B cell (primary cell): ENCODE measurements at regions of chr1 and their contacts with region 1.

Region 1: GRCh38 chr1:179954493-179955297 is at the start of gene CEP350:
- DNase-seq: peak; percentile 99
- ATAC-seq: peak; percentile 90
- H3K4me3 ChIP-seq: peak within 1 kb of the TSS; percentile 49 to 96 (median 92)
- H3K4me3 Mint-ChIP-seq: peak within 1 kb of the TSS; percentile 87
- H3K27ac ChIP-seq: peak within 1 kb of the TSS; percentile 76 to 96
- H3K27ac Mint-ChIP-seq: peak within 1 kb of the TSS; percentile 93
- H3K4me1 ChIP-seq: peaks cover 42 to 46% of the 10 kb centered on the region in 2 donors
- H3K4me1 Mint-ChIP-seq: peaks cover 47% of the 10 kb centered on the region
- H3K27me3 ChIP-seq: no peaks in the 10 kb centered on the region
- H3K27me3 Mint-ChIP-seq: no peaks in the 10 kb centered on the region
- CTCF ChIP-seq: no peak
- total RNA-seq, gene CEP350: 87.4 and 92.3 TPM in 2 replicates

Region 2: DNA sequence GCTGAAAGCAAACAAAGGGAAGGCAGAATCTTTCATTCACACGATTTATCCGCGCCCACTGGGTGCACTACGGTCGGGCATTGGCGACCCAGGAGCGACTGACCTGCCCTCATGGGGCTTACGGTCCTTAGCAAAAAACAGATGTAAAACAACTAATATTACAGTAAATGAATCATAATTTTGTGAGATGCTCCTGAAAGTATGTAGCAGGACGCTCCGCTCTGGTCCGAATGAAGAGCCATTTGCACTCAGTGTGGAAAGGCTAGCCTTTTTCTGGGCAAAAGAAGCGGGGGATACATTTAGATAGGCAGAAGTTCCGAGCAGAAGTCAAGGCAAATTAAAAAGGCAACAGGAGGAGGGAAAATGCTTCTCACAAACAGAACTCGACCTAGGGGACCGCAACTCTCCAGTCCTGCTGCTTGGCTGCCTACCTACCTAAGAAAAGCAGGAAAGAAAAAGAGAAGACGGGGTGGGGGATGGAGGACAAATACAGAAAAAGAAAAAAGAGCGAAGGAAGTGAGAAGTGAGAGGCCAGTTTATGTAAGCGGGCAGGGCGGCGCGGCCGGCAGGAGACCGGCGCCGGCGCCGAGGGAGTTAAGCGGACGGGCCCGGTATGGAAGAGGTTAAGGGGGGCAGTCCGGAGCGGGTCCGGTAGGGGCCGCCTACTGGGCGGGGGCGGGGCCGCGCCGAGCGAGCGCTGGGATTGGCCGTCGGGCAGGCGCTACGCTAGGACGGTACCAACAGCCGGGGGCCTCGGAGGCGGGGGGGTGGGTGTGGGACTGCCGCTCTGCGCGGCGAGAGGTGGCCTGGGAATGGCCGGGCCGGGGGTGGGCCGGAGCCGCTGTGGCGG is 929.3 kb before region 1 on chr1 and contains the start of gene FAM20B:
- CTCF ChIA-PET with region 1: no interaction called
- POLR2A ChIA-PET with region 1: no interaction called
- intact Hi-C with region 1: loop called (anchors 10 kb)
- DNase-seq: peak; percentile 95
- ATAC-seq: peak; percentile 80
- H3K4me3 ChIP-seq: peak within 1 kb of the TSS; percentile 77 to 97 (median 87)
- H3K4me3 Mint-ChIP-seq: peak within 1 kb of the TSS; percentile 97
- H3K27ac ChIP-seq: peak within 1 kb of the TSS; percentile 92 to 95
- H3K27ac Mint-ChIP-seq: peak within 1 kb of the TSS; percentile 95
- H3K4me1 ChIP-seq: peaks cover 29 to 36% of the 10 kb centered on the region in 2 donors
- H3K4me1 Mint-ChIP-seq: peaks cover 45% of the 10 kb centered on the region
- H3K27me3 ChIP-seq: no peaks in the 10 kb centered on the region
- H3K27me3 Mint-ChIP-seq: no peaks in the 10 kb centered on the region
- CTCF ChIP-seq: no peak
- total RNA-seq, gene FAM20B: 28.5 and 32.8 TPM in 2 replicates

Region 3: DNA sequence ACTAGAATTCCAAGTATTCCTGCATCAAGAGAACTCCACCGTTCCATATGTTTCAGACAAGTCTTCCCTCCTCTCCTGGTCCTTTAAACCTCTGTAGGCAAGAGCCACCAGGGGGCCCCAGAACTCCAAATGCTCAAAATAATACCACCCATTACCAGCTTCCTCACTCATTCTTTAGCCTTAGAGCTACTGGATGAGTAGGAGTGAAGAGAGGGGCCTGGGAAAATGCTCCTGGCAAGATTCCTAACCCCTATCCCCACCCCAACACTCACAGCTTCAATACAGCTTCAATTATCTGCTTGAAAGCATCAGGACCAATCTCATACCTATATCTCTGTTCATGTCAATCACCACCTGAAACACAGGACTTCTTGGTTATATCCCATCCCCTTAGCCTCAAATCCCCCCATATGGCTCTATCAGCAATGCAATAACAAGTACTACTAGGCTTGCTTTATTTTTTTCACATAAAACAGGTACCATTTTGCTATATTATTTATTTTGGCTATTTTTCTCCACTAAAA is 86.8 kb before region 1 on chr1:
- CTCF ChIA-PET with region 1: interaction called, 10 read pairs
- POLR2A ChIA-PET with region 1: no interaction called
- intact Hi-C with region 1: no loop called
- DNase-seq: peak; percentile 69
- ATAC-seq: peak; percentile 71
- H3K4me3 ChIP-seq: no peak overlapping the region
- H3K4me3 Mint-ChIP-seq: no peak overlapping the region
- H3K27ac ChIP-seq: no peak overlapping the region
- H3K27ac Mint-ChIP-seq: peak overlapping the region; percentile 3
- H3K4me1 ChIP-seq: peaks cover 5 to 6% of the 10 kb centered on the region in 2 donors
- H3K4me1 Mint-ChIP-seq: peaks cover 21% of the 10 kb centered on the region
- H3K27me3 ChIP-seq: no peaks in the 10 kb centered on the region
- H3K27me3 Mint-ChIP-seq: no peaks in the 10 kb centered on the region
- CTCF ChIP-seq: peak; percentile 80

Region 4: GRCh38 chr1:179882243-179883039 is 72.3 kb before region 1 on chr1 and contains the start of gene TOR1AIP1:
- CTCF ChIA-PET with region 1: interaction called, 25 read pairs
- POLR2A ChIA-PET with region 1: interaction called, 31 read pairs
- intact Hi-C with region 1: loop called (anchors 1 kb)
- DNase-seq: peak; percentile 100
- ATAC-seq: peak; percentile 75
- H3K4me3 ChIP-seq: peak within 1 kb of the TSS; percentile 78 to 99 (median 96)
- H3K4me3 Mint-ChIP-seq: peak within 1 kb of the TSS; percentile 99
- H3K27ac ChIP-seq: peak within 1 kb of the TSS; percentile 99 to 100
- H3K27ac Mint-ChIP-seq: peak within 1 kb of the TSS; percentile 100
- H3K4me1 ChIP-seq: peaks cover 20 to 40% of the 10 kb centered on the region in 2 donors
- H3K4me1 Mint-ChIP-seq: peaks cover 53% of the 10 kb centered on the region
- H3K27me3 ChIP-seq: no peaks in the 10 kb centered on the region
- H3K27me3 Mint-ChIP-seq: no peaks in the 10 kb centered on the region
- CTCF ChIP-seq: peak; percentile 59
- total RNA-seq, gene TOR1AIP1: 43.3 and 50.0 TPM in 2 replicates

Region 5: GRCh38 chr1:180154325-180155181 is 199.9 kb after region 1 on chr1 and contains the start of gene QSOX1:
- CTCF ChIA-PET with region 1: no interaction called
- POLR2A ChIA-PET with region 1: no interaction called
- intact Hi-C with region 1: loop called (anchors 1 kb)
- DNase-seq: peak; percentile 91
- ATAC-seq: peak; percentile 96
- H3K4me3 ChIP-seq: peak within 1 kb of the TSS; percentile 58 to 89 (median 84)
- H3K4me3 Mint-ChIP-seq: peak within 1 kb of the TSS; percentile 96
- H3K27ac ChIP-seq: peak within 1 kb of the TSS; percentile 21 to 65
- H3K27ac Mint-ChIP-seq: peak within 1 kb of the TSS; percentile 86
- H3K4me1 ChIP-seq: peaks cover 22 to 25% of the 10 kb centered on the region in 2 donors
- H3K4me1 Mint-ChIP-seq: peaks cover 26% of the 10 kb centered on the region
- H3K27me3 ChIP-seq: no peaks in the 10 kb centered on the region
- H3K27me3 Mint-ChIP-seq: no peaks in the 10 kb centered on the region
- CTCF ChIP-seq: peak; percentile 9
- total RNA-seq, gene QSOX1: 16.9 and 20.6 TPM in 2 replicates

Region 6: GRCh38 chr1:180502360-180503273 is 547.9 kb after region 1 on chr1 and contains the start of gene ACBD6:
- CTCF ChIA-PET with region 1: no interaction called
- POLR2A ChIA-PET with region 1: no interaction called
- intact Hi-C with region 1: loop called (anchors 5 kb)
- DNase-seq: peak; percentile 92
- ATAC-seq: peak; percentile 82
- H3K4me3 ChIP-seq: peak within 1 kb of the TSS; percentile 69 to 97 (median 84)
- H3K4me3 Mint-ChIP-seq: peak within 1 kb of the TSS; percentile 95
- H3K27ac ChIP-seq: peak within 1 kb of the TSS; percentile 74 to 87
- H3K27ac Mint-ChIP-seq: peak within 1 kb of the TSS; percentile 98
- H3K4me1 ChIP-seq: peaks cover 13 to 19% of the 10 kb centered on the region in 2 donors
- H3K4me1 Mint-ChIP-seq: peaks cover 32% of the 10 kb centered on the region
- H3K27me3 ChIP-seq: no peaks in the 10 kb centered on the region
- H3K27me3 Mint-ChIP-seq: no peaks in the 10 kb centered on the region
- CTCF ChIP-seq: no peak
- total RNA-seq, gene ACBD6: 80.9 and 82.8 TPM in 2 replicates

Region 7: DNA sequence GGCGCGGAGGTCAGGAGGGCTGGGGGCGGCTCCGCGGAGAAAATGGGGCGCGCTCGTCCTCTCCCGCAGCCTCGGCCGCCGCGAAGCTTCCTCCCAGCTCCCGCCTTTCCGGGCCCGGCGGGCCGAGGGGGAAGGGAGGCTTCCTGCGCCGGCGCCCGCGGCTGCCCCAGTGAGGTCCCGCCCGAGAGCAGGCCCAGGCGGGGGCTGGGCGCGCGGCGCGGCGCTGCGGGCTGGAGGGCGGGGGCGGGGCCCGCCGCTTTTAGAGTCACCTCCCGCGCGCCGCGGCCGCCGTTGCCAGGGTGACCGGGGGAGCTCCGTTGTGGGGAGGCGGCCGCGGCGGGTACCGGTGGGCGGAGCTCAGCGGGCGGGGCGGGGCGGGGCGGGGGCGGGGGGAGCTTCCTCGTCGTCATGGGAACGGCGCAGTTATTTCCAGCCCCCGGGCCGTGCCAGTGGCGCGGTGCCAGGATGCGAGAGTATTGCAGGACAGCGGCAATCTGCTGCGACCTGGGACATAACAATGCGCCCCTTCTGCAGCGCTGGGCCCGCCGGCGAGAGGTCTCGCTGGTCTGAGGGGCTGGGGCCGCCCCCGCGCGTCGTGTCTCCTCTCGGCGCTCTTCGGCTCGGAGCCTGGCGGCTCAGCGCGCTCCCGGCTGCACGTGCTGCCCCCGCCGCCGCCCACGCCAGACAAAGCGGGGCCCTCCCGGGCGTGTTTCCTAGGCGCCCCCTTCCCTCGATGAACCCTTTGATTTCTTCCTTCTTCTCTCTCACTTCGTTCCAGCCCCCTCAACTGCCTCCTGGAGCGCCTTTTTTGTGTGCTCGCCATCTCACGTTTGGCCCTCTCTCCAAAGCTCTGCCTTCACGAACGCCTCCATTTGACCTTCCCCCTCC is 1150.7 kb after region 1 on chr1:
- CTCF ChIA-PET with region 1: no interaction called
- POLR2A ChIA-PET with region 1: no interaction called
- intact Hi-C with region 1: loop called (anchors 10 kb)
- DNase-seq: peak; percentile 94
- ATAC-seq: peak; percentile 86
- H3K4me3 ChIP-seq: peak overlapping the region in 4 of 5 experiments; percentile 78 to 87 (median 83)
- H3K4me3 Mint-ChIP-seq: peak overlapping the region; percentile 90
- H3K27ac ChIP-seq: peak overlapping the region; percentile 66 to 85
- H3K27ac Mint-ChIP-seq: peak overlapping the region; percentile 87
- H3K4me1 ChIP-seq: peaks cover 16 to 23% of the 10 kb centered on the region in 2 donors
- H3K4me1 Mint-ChIP-seq: peaks cover 37% of the 10 kb centered on the region
- H3K27me3 ChIP-seq: no peaks in the 10 kb centered on the region
- H3K27me3 Mint-ChIP-seq: no peaks in the 10 kb centered on the region
- CTCF ChIP-seq: no peak